ENCODE measurements at regions of chr3 and their contacts with region 1.

Region 1: DNA sequence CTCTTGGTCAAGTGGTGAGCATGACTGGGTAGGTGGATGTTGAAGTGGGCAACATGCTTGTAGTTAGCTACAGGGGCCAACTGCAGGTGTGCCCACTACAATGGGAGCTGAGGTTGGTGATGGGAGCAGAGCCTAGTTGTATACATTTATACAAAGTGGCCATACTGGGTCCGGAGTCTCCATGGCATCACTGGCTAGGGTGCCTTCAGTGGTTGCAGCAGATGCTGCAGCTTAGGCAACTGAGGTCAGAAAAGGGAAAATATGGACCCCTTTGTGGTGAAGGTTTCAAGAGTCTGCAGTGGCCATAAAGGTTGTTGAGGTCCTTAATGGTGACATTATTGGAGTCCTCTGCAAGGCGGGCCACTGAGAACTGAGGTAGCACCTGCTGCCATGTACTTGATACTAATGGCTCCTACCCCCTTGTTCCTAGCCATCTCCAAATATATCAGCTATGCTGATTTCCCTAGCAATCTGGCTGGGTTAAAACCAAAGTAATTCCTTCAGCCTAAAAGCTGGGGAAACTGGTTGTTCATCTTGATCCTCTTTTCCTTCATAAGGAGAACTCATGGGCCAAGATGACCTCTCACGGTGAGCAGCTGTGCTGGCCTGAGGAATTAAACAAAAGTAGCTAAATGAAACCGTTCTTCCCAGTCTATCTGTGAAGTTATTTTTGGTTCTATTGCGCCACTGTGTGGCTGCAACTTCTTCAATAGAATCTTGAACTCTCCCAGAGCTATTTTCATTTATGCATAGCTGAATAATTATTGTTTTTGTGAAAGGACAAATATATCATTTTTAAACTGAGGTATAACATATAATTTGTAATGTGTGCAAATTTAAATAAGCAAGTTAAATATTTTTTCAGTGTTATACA is 76.0 kb upstream of the PLSCR4 start:
- DNase-seq: peak; percentile 35
- ATAC-seq: peak; percentile 78
- H3K4me3 ChIP-seq: no peak overlapping the region
- H3K27ac ChIP-seq: no peak overlapping the region
- H3K4me1 ChIP-seq: no peaks in the 10 kb centered on the region
- H3K27me3 ChIP-seq: no peaks in the 10 kb centered on the region
- CTCF ChIP-seq: peak; percentile 19 to 84 (median 65); a peak in 4 of 6 replicates
- POLR2A ChIP-seq: no peak
- RAD21 ChIP-seq: peak; percentile 83

Region 2: GRCh38 chr3:146044046-146044445 is 282.9 kb before region 1 on chr3:
- CTCF ChIA-PET with region 1: no interaction called
- POLR2A ChIA-PET with region 1: no interaction called
- RAD21 ChIA-PET with region 1: no interaction called
- intact Hi-C with region 1: no loop called
- DNase-seq: no peak
- ATAC-seq: no peak
- H3K4me3 ChIP-seq: no peak overlapping the region
- H3K27ac ChIP-seq: no peak overlapping the region
- H3K4me1 ChIP-seq: no peaks in the 10 kb centered on the region
- H3K27me3 ChIP-seq: no peaks in the 10 kb centered on the region
- CTCF ChIP-seq: no peak
- POLR2A ChIP-seq: no peak
- RAD21 ChIP-seq: no peak

Region 3: DNA sequence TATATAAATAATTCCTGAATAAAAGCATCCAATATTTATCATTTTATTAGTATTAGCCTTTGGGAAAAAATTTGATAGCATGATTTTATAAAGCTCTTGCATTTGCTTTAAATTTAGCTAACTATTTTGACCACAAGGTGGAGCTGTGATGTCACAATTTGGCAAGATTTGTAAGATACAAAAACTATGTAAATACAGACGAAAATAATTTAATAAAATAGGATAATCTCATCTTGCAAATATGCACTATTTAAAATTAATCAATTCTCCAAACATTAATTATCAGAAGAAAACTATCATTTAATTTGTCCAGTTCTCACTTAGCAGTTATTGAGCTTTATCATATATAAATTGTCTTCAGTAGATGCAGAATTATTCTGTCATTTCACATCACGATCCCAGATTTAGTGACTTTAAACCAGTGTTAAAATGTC is 261.3 kb before region 1 on chr3:
- CTCF ChIA-PET with region 1: interaction called, 58 read pairs
- POLR2A ChIA-PET with region 1: no interaction called
- RAD21 ChIA-PET with region 1: interaction called, 9 read pairs
- intact Hi-C with region 1: loop called (anchors 2 kb)
- DNase-seq: peak; percentile 38
- ATAC-seq: no peak
- H3K4me3 ChIP-seq: no peak overlapping the region
- H3K27ac ChIP-seq: no peak overlapping the region
- H3K4me1 ChIP-seq: no peaks in the 10 kb centered on the region
- H3K27me3 ChIP-seq: no peaks in the 10 kb centered on the region
- CTCF ChIP-seq: peak; percentile 57 to 70 (median 63)
- POLR2A ChIP-seq: no peak
- RAD21 ChIP-seq: peak; percentile 80

Region 4: GRCh38 chr3:146218880-146219866 is 107.7 kb before region 1 on chr3:
- CTCF ChIA-PET with region 1: interaction called, 42 read pairs
- POLR2A ChIA-PET with region 1: no interaction called
- RAD21 ChIA-PET with region 1: interaction called, 7 to 13 read pairs
- intact Hi-C with region 1: loop called (anchors 1 kb)
- DNase-seq: no peak
- ATAC-seq: no peak
- H3K4me3 ChIP-seq: no peak overlapping the region
- H3K27ac ChIP-seq: no peak overlapping the region
- H3K4me1 ChIP-seq: peaks cover 5 to 14% of the 10 kb centered on the region in 2 experiments; a peak in 3 of 4 replicates
- H3K27me3 ChIP-seq: no peaks in the 10 kb centered on the region
- CTCF ChIP-seq: peak; percentile 46 to 75 (median 71)
- POLR2A ChIP-seq: no peak
- RAD21 ChIP-seq: peak; percentile 70

Region 5: GRCh38 chr3:146313411-146314111 is 13.3 kb before region 1 on chr3:
- CTCF ChIA-PET with region 1: interaction called, 15 read pairs
- POLR2A ChIA-PET with region 1: no interaction called
- RAD21 ChIA-PET with region 1: no interaction called
- intact Hi-C with region 1: no loop called
- DNase-seq: peak; percentile 37
- ATAC-seq: peak; percentile 89
- H3K4me3 ChIP-seq: peak overlapping the region in 1 of 2 experiments; percentile 45; a peak in 2 of 4 replicates
- H3K27ac ChIP-seq: peak overlapping the region; percentile 53; the same call in 1 of the 2 replicates
- H3K4me1 ChIP-seq: peaks cover 19 to 21% of the 10 kb centered on the region in 2 experiments
- H3K27me3 ChIP-seq: no peaks in the 10 kb centered on the region
- CTCF ChIP-seq: no peak
- POLR2A ChIP-seq: no peak
- RAD21 ChIP-seq: no peak

Region 6: GRCh38 chr3:146503461-146504202 is 176.7 kb after region 1 on chr3:
- CTCF ChIA-PET with region 1: no interaction called
- POLR2A ChIA-PET with region 1: no interaction called
- RAD21 ChIA-PET with region 1: no interaction called
- intact Hi-C with region 1: no loop called
- DNase-seq: peak; percentile 86
- ATAC-seq: peak; percentile 83
- H3K4me3 ChIP-seq: peak overlapping the region in 1 of 2 experiments; percentile 28; a peak in 2 of 4 replicates
- H3K27ac ChIP-seq: peak overlapping the region; percentile 68
- H3K4me1 ChIP-seq: peaks cover 29 to 56% of the 10 kb centered on the region in 2 experiments
- H3K27me3 ChIP-seq: no peaks in the 10 kb centered on the region
- CTCF ChIP-seq: peak in 2 of 3 experiments; percentile 17 to 34; a peak in 2 of 6 replicates
- POLR2A ChIP-seq: no peak
- RAD21 ChIP-seq: peak; percentile 17